H1 (cell line): ENCODE measurements at regions of chr4 and their contacts with region 1.

Region 1: GRCh38 chr4:173505924-173506518 is 24.0 kb downstream of the HAND2 start:
- DNase-seq: peak in 1 of 2 experiments; percentile 85
- H3K4me3 ChIP-seq: peak overlapping the region in 2 of 4 experiments; percentile 19 to 49; a peak in 5 of 8 replicates
- H3K27ac ChIP-seq: no peak overlapping the region
- H3K4me1 ChIP-seq: peaks cover 6 to 27% (median 17%) of the 10 kb centered on the region in 4 experiments
- H3K27me3 ChIP-seq: peaks cover 96 to 100% (median 100%) of the 10 kb centered on the region in 4 experiments
- CTCF ChIP-seq: peak in 2 of 3 experiments; percentile 88 to 91; a peak in 3 of 4 replicates
- EP300 ChIP-seq: no peak
- POLR2A ChIP-seq: no peak
- RAD21 ChIP-seq: peak; percentile 92 to 95

Region 2: DNA sequence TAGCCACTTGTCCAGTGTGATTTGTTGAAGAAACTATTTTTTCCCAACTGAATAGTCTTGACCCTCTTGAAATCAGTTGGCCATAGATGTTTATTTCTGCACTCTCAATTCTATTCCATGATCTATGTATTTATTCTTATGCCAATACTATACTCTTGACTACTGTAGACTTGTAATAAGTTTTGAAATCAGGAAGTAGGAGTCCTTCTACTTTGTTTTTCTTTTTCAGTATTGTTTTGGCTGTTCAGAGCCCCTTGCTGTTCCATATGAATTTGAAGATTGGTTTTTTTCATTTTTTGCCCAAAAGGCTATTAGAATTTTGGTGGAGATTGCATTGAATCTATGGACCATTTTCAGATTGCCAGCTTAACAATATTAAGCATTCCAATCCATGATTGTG is 125.0 kb before region 1 on chr4:
- CTCF ChIA-PET with region 1: no interaction called
- POLR2A ChIA-PET with region 1: no interaction called
- DNase-seq: no peak
- H3K4me3 ChIP-seq: no peak overlapping the region
- H3K27ac ChIP-seq: no peak overlapping the region
- H3K4me1 ChIP-seq: no peaks in the 10 kb centered on the region
- H3K27me3 ChIP-seq: peaks cover 0 to 2% (median 0%) of the 10 kb centered on the region in 4 experiments; a peak in 1 of 7 replicates
- CTCF ChIP-seq: no peak
- EP300 ChIP-seq: no peak
- POLR2A ChIP-seq: no peak
- RAD21 ChIP-seq: no peak

Region 3: DNA sequence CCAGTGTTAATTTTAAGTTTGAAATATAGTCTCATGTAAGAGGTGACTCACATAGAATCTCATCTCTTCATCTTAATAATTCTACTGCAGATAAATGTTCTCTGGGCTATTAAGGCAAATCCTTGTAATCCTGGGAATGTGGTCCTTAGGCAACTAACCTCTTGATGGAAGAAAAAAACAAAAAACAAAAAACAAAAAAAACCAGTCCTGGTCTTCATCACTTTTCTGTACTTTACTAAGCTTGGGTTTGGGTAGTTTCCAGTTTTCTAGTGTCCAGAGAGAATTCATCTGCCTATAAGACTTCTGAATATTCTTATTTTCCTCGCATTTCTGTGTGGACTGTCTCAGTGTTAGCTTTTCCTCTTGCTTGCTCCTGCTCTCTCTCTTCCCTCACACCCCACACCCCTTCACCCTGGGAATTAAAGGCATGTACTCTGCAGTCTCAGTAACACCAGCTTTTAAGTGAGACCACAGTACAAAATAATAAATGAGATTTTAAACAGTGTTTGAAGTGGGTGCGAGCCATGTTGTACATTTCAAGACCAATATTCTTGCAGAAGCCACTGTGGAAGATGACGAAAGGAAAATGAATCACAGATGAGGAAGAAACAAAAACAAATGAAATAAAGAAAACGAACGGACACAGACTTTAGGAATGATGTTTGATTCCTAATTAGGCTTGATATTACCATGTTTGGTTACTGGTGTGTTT is 27.7 kb before region 1 on chr4:
- CTCF ChIA-PET with region 1: no interaction called
- POLR2A ChIA-PET with region 1: no interaction called
- DNase-seq: no peak
- H3K4me3 ChIP-seq: no peak overlapping the region
- H3K27ac ChIP-seq: no peak overlapping the region
- H3K4me1 ChIP-seq: peaks cover 0 to 2% (median 0%) of the 10 kb centered on the region in 4 experiments; a peak in 1 of 7 replicates
- H3K27me3 ChIP-seq: no peaks in the 10 kb centered on the region
- CTCF ChIP-seq: no peak
- EP300 ChIP-seq: no peak
- POLR2A ChIP-seq: no peak
- RAD21 ChIP-seq: no peak

Region 4: GRCh38 chr4:173494013-173494970 is 11.7 kb before region 1 on chr4:
- CTCF ChIA-PET with region 1: interaction called, 16 read pairs
- POLR2A ChIA-PET with region 1: interaction called, 4 read pairs
- DNase-seq: peak; percentile 64 to 69
- H3K4me3 ChIP-seq: peak overlapping the region; percentile 16 to 51 (median 26); a peak in 6 of 8 replicates
- H3K27ac ChIP-seq: no peak overlapping the region
- H3K4me1 ChIP-seq: peaks cover 0 to 10% (median 4%) of the 10 kb centered on the region in 4 experiments; a peak in 6 of 7 replicates
- H3K27me3 ChIP-seq: peaks cover 3 to 38% (median 21%) of the 10 kb centered on the region in 4 experiments
- CTCF ChIP-seq: peak; percentile 73 to 98 (median 94)
- EP300 ChIP-seq: no peak
- POLR2A ChIP-seq: no peak
- RAD21 ChIP-seq: peak; percentile 82 to 85

Region 5: GRCh38 chr4:173522123-173522950 is 16.3 kb after region 1 on chr4:
- CTCF ChIA-PET with region 1: interaction called, 39 read pairs
- POLR2A ChIA-PET with region 1: interaction called, 10 read pairs
- DNase-seq: peak in 1 of 2 experiments; percentile 76
- H3K4me3 ChIP-seq: peak overlapping the region; percentile 36 to 53 (median 42); a peak in 7 of 8 replicates
- H3K27ac ChIP-seq: no peak overlapping the region
- H3K4me1 ChIP-seq: peaks cover 8 to 41% (median 30%) of the 10 kb centered on the region in 4 experiments
- H3K27me3 ChIP-seq: peaks cover 97 to 100% (median 100%) of the 10 kb centered on the region in 4 experiments
- CTCF ChIP-seq: no peak
- EP300 ChIP-seq: no peak
- POLR2A ChIP-seq: no peak
- RAD21 ChIP-seq: no peak

Region 6: GRCh38 chr4:173529477-173530325 is 23.7 kb after region 1 on chr4 and contains the start of gene HAND2:
- CTCF ChIA-PET with region 1: interaction called, 27 read pairs
- POLR2A ChIA-PET with region 1: interaction called, 10 read pairs
- DNase-seq: peak in 1 of 2 experiments; percentile 72
- H3K4me3 ChIP-seq: peak within 1 kb of the TSS; percentile 25 to 57 (median 38); a peak in 7 of 8 replicates
- H3K27ac ChIP-seq: no peak within 1 kb of the TSS
- H3K4me1 ChIP-seq: peaks cover 0 to 29% (median 14%) of the 10 kb centered on the region in 4 experiments; a peak in 6 of 7 replicates
- H3K27me3 ChIP-seq: peaks cover 97 to 99% (median 98%) of the 10 kb centered on the region in 4 experiments
- CTCF ChIP-seq: no peak
- EP300 ChIP-seq: no peak
- POLR2A ChIP-seq: no peak
- RAD21 ChIP-seq: no peak
- total RNA-seq, gene HAND2: not detected in 2 replicates

Region 7: GRCh38 chr4:173538148-173538908 is 32.3 kb after region 1 on chr4:
- CTCF ChIA-PET with region 1: interaction called, 17 read pairs
- POLR2A ChIA-PET with region 1: interaction called, 3 read pairs
- DNase-seq: peak in 1 of 2 experiments; percentile 74
- H3K4me3 ChIP-seq: peak overlapping the region; percentile 7 to 55 (median 16); a peak in 7 of 8 replicates
- H3K27ac ChIP-seq: no peak overlapping the region
- H3K4me1 ChIP-seq: peaks cover 3 to 11% (median 8%) of the 10 kb centered on the region in 4 experiments; a peak in 6 of 7 replicates
- H3K27me3 ChIP-seq: peaks cover 69 to 89% (median 77%) of the 10 kb centered on the region in 4 experiments
- CTCF ChIP-seq: no peak
- EP300 ChIP-seq: no peak
- POLR2A ChIP-seq: no peak
- RAD21 ChIP-seq: no peak